Mammary epithelial cell (primary cell): ENCODE measurements at regions of chr4 and their contacts with region 1.

Region 1: GRCh38 chr4:143357161-143357845 is 20.6 kb downstream of the GAB1 start:
- DNase-seq: peak; percentile 87
- H3K4me3 ChIP-seq: no peak overlapping the region
- H3K27ac ChIP-seq: peak overlapping the region; percentile 94
- H3K4me1 ChIP-seq: peaks cover 72% of the 10 kb centered on the region
- H3K27me3 ChIP-seq: no peaks in the 10 kb centered on the region
- CTCF ChIP-seq: no peak

Region 2: DNA sequence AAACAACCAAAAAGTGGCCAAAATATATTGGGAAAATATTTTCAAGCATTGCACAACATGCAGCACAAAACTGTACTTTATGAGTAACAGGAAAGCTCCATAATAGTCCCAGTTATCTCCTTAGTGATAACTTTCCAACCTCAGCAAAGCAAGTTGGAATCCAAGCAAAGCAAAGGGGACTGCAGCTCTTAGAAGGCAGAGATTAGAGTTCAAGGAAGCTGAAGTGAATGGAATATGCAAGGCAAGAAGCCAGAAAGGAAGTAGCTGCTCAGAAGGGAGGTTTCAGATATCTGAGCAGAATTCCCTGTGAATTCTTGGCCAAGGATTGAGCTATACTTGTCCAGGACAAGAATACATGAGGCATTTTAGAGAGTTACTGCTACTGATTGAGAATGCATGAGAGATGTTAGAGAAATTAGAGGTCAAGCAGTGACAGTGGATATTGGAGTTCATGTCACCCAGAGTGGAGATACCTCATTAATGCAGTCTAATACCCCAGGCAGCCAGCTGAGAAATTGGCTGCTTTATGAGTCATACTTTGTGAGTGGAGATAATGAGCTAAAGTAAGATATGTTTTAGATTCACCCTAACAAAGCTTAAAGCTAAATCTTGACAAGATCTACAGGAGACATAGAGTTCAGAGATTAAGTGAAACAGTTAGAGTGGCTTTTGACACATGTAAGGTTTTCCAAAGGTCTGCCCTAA is 614.0 kb before region 1 on chr4:
- CTCF ChIA-PET with region 1: no interaction called
- dilution Hi-C with region 1: no loop called
- in situ Hi-C with region 1: no loop called
- intact Hi-C with region 1: no loop called
- DNase-seq: peak; percentile 10
- H3K4me3 ChIP-seq: no peak overlapping the region
- H3K27ac ChIP-seq: no peak overlapping the region
- H3K4me1 ChIP-seq: peaks cover 4% of the 10 kb centered on the region
- H3K27me3 ChIP-seq: no peaks in the 10 kb centered on the region
- CTCF ChIP-seq: no peak

Region 3: GRCh38 chr4:143346206-143346605 is 11.1 kb before region 1 on chr4:
- CTCF ChIA-PET with region 1: no interaction called
- dilution Hi-C with region 1: no loop called
- in situ Hi-C with region 1: no loop called
- intact Hi-C with region 1: loop called (anchors 1 kb)
- DNase-seq: peak; percentile 95
- H3K4me3 ChIP-seq: peak overlapping the region; percentile 3 to 35 (median 4)
- H3K27ac ChIP-seq: peak overlapping the region; percentile 87
- H3K4me1 ChIP-seq: peaks cover 35% of the 10 kb centered on the region
- H3K27me3 ChIP-seq: no peaks in the 10 kb centered on the region
- CTCF ChIP-seq: no peak